CD8-positive, alpha-beta T cell (primary cell): ENCODE measurements at regions of chr10 and their contacts with region 1.

Region 1: GRCh38 chr10:98467506-98468346 is 21.0 kb upstream of the HPS1 start:
- DNase-seq: peak; percentile 26 to 90 (median 63)
- ATAC-seq: peak; percentile 95
- H3K4me3 ChIP-seq: peak overlapping the region; percentile 64 to 77
- H3K4me3 Mint-ChIP-seq: peak overlapping the region; percentile 97
- H3K27ac ChIP-seq: peak overlapping the region; percentile 9 to 40
- H3K27ac Mint-ChIP-seq: peak overlapping the region; percentile 90
- H3K4me1 ChIP-seq: peaks cover 6% of the 10 kb centered on the region
- H3K4me1 Mint-ChIP-seq: peaks cover 9% of the 10 kb centered on the region
- H3K27me3 ChIP-seq: peaks cover 0 to 2% of the 10 kb centered on the region in 2 experiments
- H3K27me3 Mint-ChIP-seq: no peaks in the 10 kb centered on the region
- CTCF ChIP-seq: peak; percentile 76

Region 2: DNA sequence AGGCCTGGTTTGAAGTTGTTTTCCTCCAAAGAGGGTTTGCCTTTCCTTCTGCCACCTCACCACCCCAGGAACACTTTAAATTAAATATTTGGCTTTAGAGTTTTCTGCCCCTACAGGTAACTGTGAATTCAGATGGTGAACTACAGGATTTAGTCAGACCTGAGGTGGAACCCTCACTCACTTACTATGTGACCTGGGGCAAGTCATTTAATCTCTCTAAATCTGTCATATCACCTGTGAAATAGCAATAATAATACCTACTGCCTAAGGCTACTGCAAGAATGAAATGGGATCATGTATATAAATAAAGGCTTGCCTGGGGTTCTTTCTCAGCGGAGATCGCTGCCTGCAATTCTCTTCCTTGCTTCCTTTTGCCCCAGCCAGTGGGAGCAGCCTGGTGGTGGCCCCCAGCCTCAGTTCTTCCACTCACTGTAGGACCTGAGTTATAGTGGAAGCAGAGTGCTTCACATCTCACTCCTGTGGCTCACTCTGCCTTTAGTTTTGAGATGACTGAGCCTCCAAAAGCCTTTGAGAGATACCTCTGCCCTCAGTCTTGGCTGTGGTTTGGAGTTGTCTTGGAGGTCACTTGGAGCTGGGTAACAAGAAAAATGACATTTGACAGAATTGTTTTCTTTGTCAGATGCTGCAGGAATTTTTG is 901.3 kb before region 1 on chr10:
- CTCF ChIA-PET with region 1: no interaction called
- POLR2A ChIA-PET with region 1: no interaction called
- intact Hi-C with region 1: no loop called
- DNase-seq: no peak
- ATAC-seq: no peak
- H3K4me3 ChIP-seq: no peak overlapping the region
- H3K4me3 Mint-ChIP-seq: no peak overlapping the region
- H3K27ac ChIP-seq: no peak overlapping the region
- H3K27ac Mint-ChIP-seq: no peak overlapping the region
- H3K4me1 ChIP-seq: no peaks in the 10 kb centered on the region
- H3K4me1 Mint-ChIP-seq: no peaks in the 10 kb centered on the region
- H3K27me3 ChIP-seq: no peaks in the 10 kb centered on the region
- H3K27me3 Mint-ChIP-seq: no peaks in the 10 kb centered on the region
- CTCF ChIP-seq: no peak

Region 3: DNA sequence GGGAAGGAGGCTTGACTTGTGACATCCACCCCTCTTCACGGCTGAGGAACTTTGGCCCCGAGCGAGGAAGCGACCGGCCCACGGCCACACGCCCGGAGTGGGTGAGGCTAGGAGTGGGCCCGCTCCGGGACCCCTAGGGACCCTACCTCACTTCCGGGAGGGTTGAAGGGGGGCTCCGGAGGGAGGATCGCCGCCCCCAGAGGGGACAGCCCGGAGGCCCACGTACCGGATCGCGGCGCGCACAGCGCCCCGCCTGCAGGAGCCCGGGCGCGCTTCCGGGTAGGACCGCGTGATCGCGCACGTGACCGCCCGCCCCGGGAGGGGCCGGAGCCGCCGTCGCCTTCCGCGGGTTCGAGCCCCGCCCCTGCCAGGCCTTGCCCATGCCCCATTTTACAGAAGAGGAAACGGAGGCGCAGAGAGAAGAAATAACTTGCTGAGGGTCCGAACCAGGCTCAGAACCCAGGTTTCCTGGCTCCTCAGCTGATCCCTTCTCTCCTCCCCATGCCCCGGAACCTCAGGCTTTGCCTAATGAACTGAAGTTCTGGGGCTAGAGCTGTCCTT is 21.0 kb before region 1 on chr10 and contains the start of gene HPS1:
- CTCF ChIA-PET with region 1: interaction called, 7 read pairs
- POLR2A ChIA-PET with region 1: interaction called, 3 read pairs
- intact Hi-C with region 1: loop called in 1 of 2 experiments (anchors 1 kb)
- DNase-seq: peak; percentile 60 to 89 (median 79)
- ATAC-seq: peak; percentile 85
- H3K4me3 ChIP-seq: peak within 1 kb of the TSS; percentile 74 to 91
- H3K4me3 Mint-ChIP-seq: peak within 1 kb of the TSS; percentile 90
- H3K27ac ChIP-seq: peak within 1 kb of the TSS; percentile 81 to 90
- H3K27ac Mint-ChIP-seq: peak within 1 kb of the TSS; percentile 92
- H3K4me1 ChIP-seq: peaks cover 16% of the 10 kb centered on the region
- H3K4me1 Mint-ChIP-seq: peaks cover 45% of the 10 kb centered on the region
- H3K27me3 ChIP-seq: no peaks in the 10 kb centered on the region
- H3K27me3 Mint-ChIP-seq: peaks cover under 1% of the 10 kb centered on the region
- CTCF ChIP-seq: no peak
- total RNA-seq, gene HPS1: 54.1 to 54.3 TPM

Region 4: GRCh38 chr10:98478430-98479222 is 10.9 kb after region 1 on chr10:
- CTCF ChIA-PET with region 1: interaction called, 20 read pairs
- POLR2A ChIA-PET with region 1: interaction called, 3 read pairs
- intact Hi-C with region 1: no loop called
- DNase-seq: no peak
- ATAC-seq: no peak
- H3K4me3 ChIP-seq: no peak overlapping the region
- H3K4me3 Mint-ChIP-seq: no peak overlapping the region
- H3K27ac ChIP-seq: no peak overlapping the region
- H3K27ac Mint-ChIP-seq: no peak overlapping the region
- H3K4me1 ChIP-seq: peaks cover 10% of the 10 kb centered on the region
- H3K4me1 Mint-ChIP-seq: peaks cover 25% of the 10 kb centered on the region
- H3K27me3 ChIP-seq: no peaks in the 10 kb centered on the region
- H3K27me3 Mint-ChIP-seq: no peaks in the 10 kb centered on the region
- CTCF ChIP-seq: no peak

Region 5: DNA sequence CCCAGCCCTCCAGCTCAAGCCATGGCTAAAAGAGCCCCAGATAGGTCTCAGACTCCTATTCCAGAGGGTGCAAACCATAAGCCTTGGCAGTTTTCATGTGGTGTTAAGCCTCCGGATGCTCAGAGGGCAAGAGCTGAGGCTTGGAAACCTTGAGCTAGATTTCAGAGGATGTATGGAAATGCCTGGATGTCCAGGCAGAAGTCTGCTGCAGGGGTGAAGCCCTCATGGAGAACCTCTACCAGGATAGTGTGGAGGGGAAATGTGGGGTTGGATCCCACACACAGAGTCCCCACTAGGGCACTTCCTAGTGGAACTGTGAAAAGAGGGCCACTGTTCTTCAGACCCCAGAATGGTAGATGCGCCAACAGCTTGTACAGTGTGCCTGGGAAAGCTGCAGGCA is 781.1 kb after region 1 on chr10:
- CTCF ChIA-PET with region 1: interaction called, 31 read pairs
- POLR2A ChIA-PET with region 1: no interaction called
- intact Hi-C with region 1: loop called in 1 of 2 experiments (anchors 1 kb)
- DNase-seq: no peak
- ATAC-seq: no peak
- H3K4me3 ChIP-seq: no peak overlapping the region
- H3K4me3 Mint-ChIP-seq: no peak overlapping the region
- H3K27ac ChIP-seq: no peak overlapping the region
- H3K27ac Mint-ChIP-seq: no peak overlapping the region
- H3K4me1 ChIP-seq: no peaks in the 10 kb centered on the region
- H3K4me1 Mint-ChIP-seq: no peaks in the 10 kb centered on the region
- H3K27me3 ChIP-seq: no peaks in the 10 kb centered on the region
- H3K27me3 Mint-ChIP-seq: peaks cover 28% of the 10 kb centered on the region
- CTCF ChIP-seq: no peak

Region 6: GRCh38 chr10:99612167-99612831 is 1144.6 kb after region 1 on chr10:
- CTCF ChIA-PET with region 1: interaction called, 4 read pairs
- POLR2A ChIA-PET with region 1: no interaction called
- intact Hi-C with region 1: loop called (anchors 1 kb)
- DNase-seq: peak in 6 of 9 experiments; percentile 5 to 73 (median 29)
- ATAC-seq: peak; percentile 75
- H3K4me3 ChIP-seq: no peak overlapping the region
- H3K4me3 Mint-ChIP-seq: no peak overlapping the region
- H3K27ac ChIP-seq: peak overlapping the region in 1 of 2 experiments; percentile 12
- H3K27ac Mint-ChIP-seq: peak overlapping the region; percentile 37
- H3K4me1 ChIP-seq: peaks cover 5% of the 10 kb centered on the region
- H3K4me1 Mint-ChIP-seq: peaks cover 27% of the 10 kb centered on the region
- H3K27me3 ChIP-seq: no peaks in the 10 kb centered on the region
- H3K27me3 Mint-ChIP-seq: no peaks in the 10 kb centered on the region
- CTCF ChIP-seq: peak; percentile 91

Region 7: GRCh38 chr10:100046021-100046486 is 1578.3 kb after region 1 on chr10:
- CTCF ChIA-PET with region 1: no interaction called
- POLR2A ChIA-PET with region 1: no interaction called
- intact Hi-C with region 1: loop called in 1 of 2 experiments (anchors 5 kb)
- DNase-seq: peak; percentile 58 to 87 (median 78)
- ATAC-seq: peak; percentile 67
- H3K4me3 ChIP-seq: no peak overlapping the region
- H3K4me3 Mint-ChIP-seq: no peak overlapping the region
- H3K27ac ChIP-seq: no peak overlapping the region
- H3K27ac Mint-ChIP-seq: no peak overlapping the region
- H3K4me1 ChIP-seq: no peaks in the 10 kb centered on the region
- H3K4me1 Mint-ChIP-seq: no peaks in the 10 kb centered on the region
- H3K27me3 ChIP-seq: no peaks in the 10 kb centered on the region
- H3K27me3 Mint-ChIP-seq: no peaks in the 10 kb centered on the region
- CTCF ChIP-seq: peak; percentile 83